GM13977 (cell line): ENCODE measurements at regions of chr15 and their contacts with region 1.

Region 1: GRCh38 chr15:44711356-44712107 is at the start of gene B2M:
- DNase-seq: peak; percentile 90
- CTCF ChIP-seq: no peak

Region 2: DNA sequence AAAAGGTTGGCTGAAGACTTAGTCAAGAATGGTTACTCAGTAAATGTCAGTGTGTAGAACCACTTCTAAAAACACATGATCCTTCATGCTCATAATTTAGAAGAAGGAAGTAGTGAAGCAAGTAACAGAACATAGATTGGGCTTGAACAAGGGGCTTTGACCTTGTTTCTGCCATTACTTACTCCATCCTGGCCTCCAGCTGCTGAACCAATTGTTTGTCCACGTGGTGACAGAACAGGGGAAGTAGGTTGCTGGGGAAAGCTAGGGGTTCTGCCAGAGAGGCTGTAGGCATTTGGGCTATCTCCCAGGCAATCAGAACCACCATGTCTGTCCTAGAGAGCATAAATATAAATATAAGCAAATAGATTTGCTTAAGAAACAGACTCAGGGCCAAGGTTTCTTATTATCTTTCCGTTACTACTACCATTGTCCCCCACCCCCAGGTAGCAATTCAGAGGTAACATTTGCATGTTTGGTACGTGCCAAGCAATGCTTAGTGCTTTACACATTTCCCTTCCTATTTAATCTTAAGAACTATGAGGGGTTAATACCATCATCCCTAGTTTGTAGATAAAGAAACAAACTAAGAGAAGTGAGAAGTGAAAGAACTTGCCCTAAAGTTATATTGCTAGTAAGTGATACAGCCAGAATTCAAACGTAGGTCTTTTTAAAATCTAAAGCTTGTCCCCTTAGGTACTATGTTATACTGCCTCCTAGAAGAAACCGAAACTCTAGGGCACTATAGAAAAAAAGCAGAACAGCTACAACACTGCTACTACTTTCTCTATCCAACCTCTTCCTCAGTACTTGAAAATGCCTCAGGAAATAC is 45.1 kb before region 1 on chr15:
- in situ Hi-C with region 1: loop called (anchors 5 kb)
- DNase-seq: peak; percentile 25
- CTCF ChIP-seq: no peak